ENCODE measurements at regions of chr16 and their contacts with region 1.

Region 1: GRCh38 chr16:19114352-19115052 is 738 bp downstream of the ITPRIPL2 start:
- H3K4me3 Mint-ChIP-seq: peak overlapping the region; percentile 97
- H3K27ac Mint-ChIP-seq: peak overlapping the region; percentile 93
- H3K4me1 Mint-ChIP-seq: peaks cover 47% of the 10 kb centered on the region
- H3K27me3 Mint-ChIP-seq: no peaks in the 10 kb centered on the region

Region 2: GRCh38 chr16:19130852-19131810 is 16.6 kb after region 1 on chr16:
- intact Hi-C with region 1: loop called (anchors 1 kb)
- H3K4me3 Mint-ChIP-seq: peak overlapping the region; percentile 61
- H3K27ac Mint-ChIP-seq: peak overlapping the region; percentile 93
- H3K4me1 Mint-ChIP-seq: peaks cover 74% of the 10 kb centered on the region
- H3K27me3 Mint-ChIP-seq: no peaks in the 10 kb centered on the region

Region 3: GRCh38 chr16:19179546-19180490 is 65.3 kb after region 1 on chr16:
- intact Hi-C with region 1: loop called (anchors 5 kb)
- H3K4me3 Mint-ChIP-seq: peak overlapping the region; percentile 52
- H3K27ac Mint-ChIP-seq: peak overlapping the region; percentile 86
- H3K4me1 Mint-ChIP-seq: peaks cover 65% of the 10 kb centered on the region
- H3K27me3 Mint-ChIP-seq: no peaks in the 10 kb centered on the region

Region 4: DNA sequence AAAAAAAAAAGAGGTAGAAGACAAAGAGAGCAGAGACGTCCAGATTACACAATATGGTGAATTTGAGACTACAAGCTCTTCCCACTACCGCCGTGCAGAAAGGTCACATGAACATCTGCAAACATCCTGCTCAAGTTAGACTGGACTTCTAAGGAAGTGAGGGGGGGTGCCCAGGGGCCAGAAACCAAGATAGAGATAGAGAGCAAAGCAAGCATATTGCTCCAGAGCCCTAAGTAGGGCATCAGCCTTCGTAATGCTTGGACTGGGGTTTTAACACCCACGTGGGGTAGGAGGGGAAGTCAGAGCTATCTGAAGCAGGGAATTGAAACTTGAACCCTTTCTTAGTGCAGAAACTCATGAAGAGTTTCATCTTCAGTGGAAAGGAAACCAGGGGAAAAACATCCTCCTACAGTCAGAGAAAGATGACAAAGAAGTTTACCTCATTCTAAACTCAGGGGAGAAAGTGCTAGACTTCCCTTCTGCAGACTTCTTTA is 179.7 kb after region 1 on chr16:
- intact Hi-C with region 1: loop called (anchors 5 kb)
- H3K4me3 Mint-ChIP-seq: no peak overlapping the region
- H3K27ac Mint-ChIP-seq: peak overlapping the region; percentile 95
- H3K4me1 Mint-ChIP-seq: peaks cover 76% of the 10 kb centered on the region
- H3K27me3 Mint-ChIP-seq: peaks cover 5% of the 10 kb centered on the region